CD14-positive monocyte (primary cell): ENCODE measurements at regions of chr1 and their contacts with region 1.

Region 1: DNA sequence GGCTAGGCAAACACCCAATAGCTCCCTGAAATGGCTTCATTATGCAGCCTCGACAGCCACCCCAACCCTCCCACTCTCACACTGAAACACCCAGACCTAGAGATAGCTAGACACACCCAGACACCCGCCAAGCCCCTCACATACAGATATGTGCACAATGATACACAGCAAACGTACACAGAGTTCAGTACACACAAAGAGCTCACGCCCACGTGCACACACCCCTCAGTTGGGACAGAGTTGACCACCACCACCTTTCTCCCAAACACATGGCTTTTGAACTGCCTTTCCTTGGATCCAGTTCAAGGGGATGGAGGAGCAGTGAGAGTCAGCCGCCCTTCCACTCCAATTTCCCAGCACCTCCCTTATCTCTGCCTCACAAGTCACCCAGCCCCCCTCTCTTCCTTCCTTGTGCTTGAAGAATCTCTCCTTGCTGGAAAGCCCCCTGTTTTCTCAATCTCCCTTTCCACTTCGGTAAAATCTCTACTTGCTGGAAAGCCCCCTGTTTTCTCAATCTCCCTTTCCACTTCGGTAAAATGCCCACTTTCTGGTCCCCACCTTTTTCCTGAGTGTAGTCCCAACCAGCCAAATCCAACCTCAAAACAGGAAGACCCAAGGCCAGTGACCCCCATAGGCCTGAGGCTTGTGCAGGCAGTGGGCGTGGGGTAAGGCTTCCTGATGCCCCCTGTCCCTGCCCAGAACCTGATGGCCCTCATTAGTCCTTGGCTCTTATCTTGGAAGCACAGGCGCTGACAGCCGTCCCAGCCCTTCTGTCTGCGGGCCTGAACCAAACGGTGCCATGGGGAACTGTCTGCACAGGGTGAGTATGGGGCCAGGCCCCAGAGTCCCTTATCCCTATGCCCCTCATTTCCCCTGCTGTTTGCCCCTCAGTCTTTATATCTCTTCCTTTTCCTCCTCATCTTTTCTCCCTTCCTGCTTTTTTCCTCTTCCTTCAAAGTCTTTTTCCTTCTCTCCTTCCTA is at the start of gene ACKR1:
- DNase-seq: no peak
- H3K4me3 ChIP-seq: no peak within 1 kb of the TSS
- H3K4me3 Mint-ChIP-seq: no peak within 1 kb of the TSS
- H3K27ac ChIP-seq: no peak within 1 kb of the TSS
- H3K27ac Mint-ChIP-seq: peak within 1 kb of the TSS in 2 of 7 donors; percentile 37
- H3K4me1 ChIP-seq: peaks cover 19 to 25% of the 10 kb centered on the region in 2 donors
- H3K4me1 Mint-ChIP-seq: peaks cover 45% of the 10 kb centered on the region
- H3K27me3 ChIP-seq: peaks cover 0 to 19% of the 10 kb centered on the region in 2 donors
- H3K27me3 Mint-ChIP-seq: peaks cover 12 to 31% (median 24%) of the 10 kb centered on the region in 3 donors
- CTCF ChIP-seq: no peak
- polyA plus RNA-seq, gene ACKR1: 0.14 TPM in 1 of 3 donors, not detected in the others

Region 2: DNA sequence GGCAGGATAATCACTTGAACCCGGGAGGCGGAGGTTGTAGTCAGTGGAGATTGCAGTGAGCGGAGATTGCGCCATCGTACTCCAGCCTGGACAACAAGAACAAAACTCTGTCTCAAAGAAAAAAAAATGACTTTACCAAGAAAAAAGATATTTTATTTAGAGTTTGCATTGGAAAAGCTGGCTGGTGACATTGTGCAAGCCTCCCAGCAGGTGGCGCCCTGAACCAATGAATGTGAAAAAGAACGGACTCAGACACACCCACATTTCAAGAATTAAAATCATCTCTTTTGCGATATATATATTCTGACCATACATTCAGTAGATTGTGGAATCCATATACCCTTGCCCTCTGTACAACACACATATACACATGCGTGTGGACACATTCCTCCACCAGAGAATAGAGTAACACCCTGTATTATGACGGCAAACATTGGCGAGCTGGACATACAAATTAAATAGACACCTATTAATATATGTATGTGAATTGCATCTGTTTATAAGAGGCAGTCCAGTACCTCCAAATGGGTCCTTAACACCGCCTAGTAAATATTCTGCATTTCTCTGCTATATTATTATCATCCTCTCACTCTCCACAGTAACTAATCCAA is 72.1 kb before region 1 on chr1:
- intact Hi-C with region 1: loop called in 1 of 2 experiments (anchors 2 kb)
- DNase-seq: peak; percentile 56 to 66 (median 57)
- H3K4me3 ChIP-seq: no peak overlapping the region
- H3K4me3 Mint-ChIP-seq: no peak overlapping the region
- H3K27ac ChIP-seq: no peak overlapping the region
- H3K27ac Mint-ChIP-seq: no peak overlapping the region
- H3K4me1 ChIP-seq: no peaks in the 10 kb centered on the region
- H3K4me1 Mint-ChIP-seq: peaks cover 2% of the 10 kb centered on the region
- H3K27me3 ChIP-seq: no peaks in the 10 kb centered on the region
- H3K27me3 Mint-ChIP-seq: peaks cover 0 to 3% (median 0%) of the 10 kb centered on the region in 3 donors
- CTCF ChIP-seq: peak; percentile 89

Region 3: DNA sequence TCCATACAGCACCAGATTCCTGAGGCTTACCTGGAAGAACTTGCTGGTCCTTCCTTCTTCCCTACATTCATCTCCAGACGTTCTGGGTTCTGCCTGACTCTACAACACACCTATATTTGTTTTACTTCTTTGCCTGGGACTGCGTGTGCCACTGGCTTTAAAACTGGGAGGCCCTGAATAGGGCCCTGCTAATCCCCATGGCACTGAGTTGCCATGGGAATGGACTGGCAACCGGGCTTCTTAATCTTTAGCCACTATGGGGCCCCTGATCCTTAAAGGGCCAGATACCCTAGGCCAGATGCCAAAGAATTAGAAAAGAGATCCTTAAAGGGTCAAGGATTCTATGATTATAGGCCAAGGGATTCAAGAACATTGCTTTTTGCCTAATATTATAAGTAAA is 57.5 kb before region 1 on chr1:
- intact Hi-C with region 1: loop called in 1 of 2 experiments (anchors 5 kb)
- DNase-seq: no peak
- H3K4me3 ChIP-seq: no peak overlapping the region
- H3K4me3 Mint-ChIP-seq: no peak overlapping the region
- H3K27ac ChIP-seq: no peak overlapping the region
- H3K27ac Mint-ChIP-seq: no peak overlapping the region
- H3K4me1 ChIP-seq: peaks cover 6% of the 10 kb centered on the region in 2 donors
- H3K4me1 Mint-ChIP-seq: peaks cover 2% of the 10 kb centered on the region
- H3K27me3 ChIP-seq: peaks cover 14 to 15% of the 10 kb centered on the region in 2 donors
- H3K27me3 Mint-ChIP-seq: peaks cover 5 to 6% (median 5%) of the 10 kb centered on the region in 3 donors
- CTCF ChIP-seq: no peak

Region 4: GRCh38 chr1:159266832-159267231 is 62.4 kb after region 1 on chr1:
- intact Hi-C with region 1: no loop called
- DNase-seq: no peak
- H3K4me3 ChIP-seq: no peak overlapping the region
- H3K4me3 Mint-ChIP-seq: no peak overlapping the region
- H3K27ac ChIP-seq: no peak overlapping the region
- H3K27ac Mint-ChIP-seq: no peak overlapping the region
- H3K4me1 ChIP-seq: no peaks in the 10 kb centered on the region
- H3K4me1 Mint-ChIP-seq: no peaks in the 10 kb centered on the region
- H3K27me3 ChIP-seq: no peaks in the 10 kb centered on the region
- H3K27me3 Mint-ChIP-seq: peaks cover 0 to 2% (median 0%) of the 10 kb centered on the region in 3 donors
- CTCF ChIP-seq: no peak